ENCODE measurements at regions of chr18 and their contacts with region 1.

Region 1: GRCh38 chr18:12883684-12884405 is at the start of gene PTPN2:
- DNase-seq: peak; percentile 97
- ATAC-seq: peak; percentile 76
- H3K4me3 ChIP-seq: peak within 1 kb of the TSS; percentile 66 to 92 (median 78)
- H3K4me3 Mint-ChIP-seq: peak within 1 kb of the TSS; percentile 89
- H3K27ac ChIP-seq: peak within 1 kb of the TSS; percentile 99
- H3K27ac Mint-ChIP-seq: peak within 1 kb of the TSS; percentile 95
- H3K4me1 ChIP-seq: peaks cover 64 to 71% of the 10 kb centered on the region in 2 donors
- H3K4me1 Mint-ChIP-seq: peaks cover 71% of the 10 kb centered on the region
- H3K27me3 ChIP-seq: no peaks in the 10 kb centered on the region
- H3K27me3 Mint-ChIP-seq: no peaks in the 10 kb centered on the region
- CTCF ChIP-seq: no peak
- total RNA-seq, gene PTPN2: 64.8 and 75.5 TPM in 2 replicates

Region 2: GRCh38 chr18:11851146-11851805 is 1032.6 kb before region 1 on chr18 and contains the start of gene CHMP1B:
- CTCF ChIA-PET with region 1: no interaction called
- POLR2A ChIA-PET with region 1: no interaction called
- intact Hi-C with region 1: loop called (anchors 2 kb)
- DNase-seq: peak; percentile 98
- ATAC-seq: peak; percentile 94
- H3K4me3 ChIP-seq: peak within 1 kb of the TSS; percentile 85 to 100 (median 98)
- H3K4me3 Mint-ChIP-seq: peak within 1 kb of the TSS; percentile 100
- H3K27ac ChIP-seq: peak within 1 kb of the TSS; percentile 93 to 97
- H3K27ac Mint-ChIP-seq: peak within 1 kb of the TSS; percentile 99
- H3K4me1 ChIP-seq: peaks cover 28 to 31% of the 10 kb centered on the region in 2 donors
- H3K4me1 Mint-ChIP-seq: peaks cover 34% of the 10 kb centered on the region
- H3K27me3 ChIP-seq: no peaks in the 10 kb centered on the region
- H3K27me3 Mint-ChIP-seq: no peaks in the 10 kb centered on the region
- CTCF ChIP-seq: no peak
- total RNA-seq, gene CHMP1B: 52.2 and 55.4 TPM in 2 replicates

Region 3: DNA sequence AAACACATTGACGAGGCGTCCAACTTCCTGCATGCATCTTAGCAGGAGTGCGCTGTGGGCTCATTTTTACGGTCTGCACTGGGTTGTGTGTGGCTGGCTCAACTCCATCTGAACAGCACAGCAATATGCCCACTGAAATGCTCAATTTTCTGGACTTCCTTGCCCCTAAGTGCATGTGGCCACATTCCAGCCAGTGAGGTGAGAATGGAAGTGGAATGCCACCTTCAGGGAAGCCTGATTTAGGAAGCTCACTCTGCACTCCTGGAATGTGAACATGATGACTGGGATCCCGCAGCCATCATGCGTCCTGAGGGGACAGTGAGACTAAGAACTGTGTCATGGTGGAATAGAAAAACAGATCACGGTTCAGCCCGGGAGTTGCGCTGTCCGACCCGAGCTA is 104.8 kb before region 1 on chr18:
- CTCF ChIA-PET with region 1: no interaction called
- POLR2A ChIA-PET with region 1: no interaction called
- intact Hi-C with region 1: no loop called
- DNase-seq: no peak
- ATAC-seq: no peak
- H3K4me3 ChIP-seq: no peak overlapping the region
- H3K4me3 Mint-ChIP-seq: no peak overlapping the region
- H3K27ac ChIP-seq: no peak overlapping the region
- H3K27ac Mint-ChIP-seq: no peak overlapping the region
- H3K4me1 ChIP-seq: no peaks in the 10 kb centered on the region
- H3K4me1 Mint-ChIP-seq: no peaks in the 10 kb centered on the region
- H3K27me3 ChIP-seq: no peaks in the 10 kb centered on the region
- H3K27me3 Mint-ChIP-seq: peaks cover 3% of the 10 kb centered on the region
- CTCF ChIP-seq: no peak

Region 4: DNA sequence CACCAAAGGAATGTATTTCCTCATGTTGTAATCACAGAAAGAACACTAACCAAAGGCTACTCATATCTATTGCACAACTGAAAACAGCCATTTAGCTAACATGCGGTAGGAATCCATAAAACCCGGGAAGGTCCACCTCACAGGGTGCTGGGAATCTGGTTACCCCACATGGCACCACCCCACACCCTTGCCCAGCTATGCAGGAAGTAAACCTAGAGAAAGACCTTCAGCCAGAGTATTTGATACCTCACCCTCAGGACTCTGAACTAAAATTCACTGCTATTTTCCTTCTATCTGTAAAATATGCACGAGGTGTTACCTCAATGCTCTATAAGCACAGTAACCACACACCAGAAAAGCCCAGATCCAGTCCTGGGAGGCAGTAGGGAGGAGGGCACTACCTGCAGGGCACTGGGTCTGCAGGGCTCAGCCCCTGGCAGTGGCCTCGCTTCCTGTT is 45.6 kb before region 1 on chr18:
- CTCF ChIA-PET with region 1: interaction called, 4 read pairs
- POLR2A ChIA-PET with region 1: interaction called, 4 read pairs
- intact Hi-C with region 1: loop called (anchors 1 kb)
- DNase-seq: peak; percentile 31
- ATAC-seq: no peak
- H3K4me3 ChIP-seq: peak overlapping the region in 2 of 5 experiments; percentile 15 to 38
- H3K4me3 Mint-ChIP-seq: peak overlapping the region; percentile 65
- H3K27ac ChIP-seq: peak overlapping the region; percentile 51 to 76
- H3K27ac Mint-ChIP-seq: peak overlapping the region; percentile 74
- H3K4me1 ChIP-seq: peaks cover 30 to 36% of the 10 kb centered on the region in 2 donors
- H3K4me1 Mint-ChIP-seq: peaks cover 39% of the 10 kb centered on the region
- H3K27me3 ChIP-seq: no peaks in the 10 kb centered on the region
- H3K27me3 Mint-ChIP-seq: no peaks in the 10 kb centered on the region
- CTCF ChIP-seq: no peak

Region 5: GRCh38 chr18:12947355-12948041 is 63.7 kb after region 1 on chr18 and contains the start of gene SEH1L:
- CTCF ChIA-PET with region 1: interaction called, 4 read pairs
- POLR2A ChIA-PET with region 1: interaction called, 5 read pairs
- intact Hi-C with region 1: loop called (anchors 1 kb)
- DNase-seq: no peak
- ATAC-seq: peak; percentile 91
- H3K4me3 ChIP-seq: peak within 1 kb of the TSS; percentile 69 to 97 (median 75)
- H3K4me3 Mint-ChIP-seq: peak within 1 kb of the TSS; percentile 96
- H3K27ac ChIP-seq: peak within 1 kb of the TSS; percentile 88 to 89
- H3K27ac Mint-ChIP-seq: peak within 1 kb of the TSS; percentile 94
- H3K4me1 ChIP-seq: peaks cover 5 to 22% of the 10 kb centered on the region in 2 donors
- H3K4me1 Mint-ChIP-seq: peaks cover 29% of the 10 kb centered on the region
- H3K27me3 ChIP-seq: no peaks in the 10 kb centered on the region
- H3K27me3 Mint-ChIP-seq: no peaks in the 10 kb centered on the region
- CTCF ChIP-seq: no peak
- total RNA-seq, gene SEH1L: 46.4 and 48.1 TPM in 2 replicates

Region 6: GRCh38 chr18:13566941-13567746 is 683.3 kb after region 1 on chr18:
- CTCF ChIA-PET with region 1: no interaction called
- POLR2A ChIA-PET with region 1: no interaction called
- intact Hi-C with region 1: loop called (anchors 10 kb)
- DNase-seq: peak; percentile 88
- ATAC-seq: peak; percentile 60
- H3K4me3 ChIP-seq: peak overlapping the region; percentile 26 to 53 (median 35)
- H3K4me3 Mint-ChIP-seq: peak overlapping the region; percentile 88
- H3K27ac ChIP-seq: peak overlapping the region; percentile 97
- H3K27ac Mint-ChIP-seq: peak overlapping the region; percentile 95
- H3K4me1 ChIP-seq: peaks cover 67 to 72% of the 10 kb centered on the region in 2 donors
- H3K4me1 Mint-ChIP-seq: peaks cover 75% of the 10 kb centered on the region
- H3K27me3 ChIP-seq: no peaks in the 10 kb centered on the region
- H3K27me3 Mint-ChIP-seq: no peaks in the 10 kb centered on the region
- CTCF ChIP-seq: no peak

Measured in B cell (primary cell).